GM10248 (cell line): ENCODE measurements at regions of chr20 and their contacts with region 1.

Region 1: DNA sequence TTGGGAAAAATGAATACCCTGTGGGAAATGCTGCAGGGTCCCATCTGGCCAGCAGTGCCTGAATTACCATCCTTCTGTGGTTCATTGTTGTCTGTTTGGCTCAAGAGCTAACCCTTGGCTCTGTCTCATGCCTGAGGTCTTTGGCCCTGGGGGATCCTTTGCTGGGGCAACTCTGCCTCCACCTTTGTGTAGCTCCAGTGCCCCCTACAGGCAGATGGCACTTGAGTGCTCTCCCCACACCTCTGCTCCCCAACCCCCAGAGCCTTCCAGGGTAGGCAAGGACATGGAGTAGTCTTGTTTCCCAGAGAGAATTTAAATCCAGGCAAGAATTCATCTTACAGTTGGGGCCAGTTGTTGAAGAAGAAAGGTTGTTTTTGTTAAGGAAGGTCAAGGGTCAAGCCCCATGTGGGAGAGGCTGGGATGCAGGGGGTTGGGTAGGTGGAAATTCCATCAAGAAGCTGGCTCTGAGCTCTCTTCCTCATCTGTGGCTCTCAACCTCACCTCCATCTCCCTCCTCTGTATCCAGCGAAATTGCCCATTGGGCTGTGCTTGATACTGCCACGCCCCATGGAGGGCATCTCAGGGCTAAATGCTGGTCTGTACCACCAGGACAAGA is 44.2 kb downstream of the ZNF831 start:
- DNase-seq: peak; percentile 86
- CTCF ChIP-seq: peak; percentile 79

Region 2: GRCh38 chr20:58864350-58864749 is 343.5 kb before region 1 on chr20:
- CTCF ChIA-PET with region 1: interaction called, 51 read pairs
- POLR2A ChIA-PET with region 1: no interaction called
- DNase-seq: no peak
- CTCF ChIP-seq: peak; percentile 57

Region 3: DNA sequence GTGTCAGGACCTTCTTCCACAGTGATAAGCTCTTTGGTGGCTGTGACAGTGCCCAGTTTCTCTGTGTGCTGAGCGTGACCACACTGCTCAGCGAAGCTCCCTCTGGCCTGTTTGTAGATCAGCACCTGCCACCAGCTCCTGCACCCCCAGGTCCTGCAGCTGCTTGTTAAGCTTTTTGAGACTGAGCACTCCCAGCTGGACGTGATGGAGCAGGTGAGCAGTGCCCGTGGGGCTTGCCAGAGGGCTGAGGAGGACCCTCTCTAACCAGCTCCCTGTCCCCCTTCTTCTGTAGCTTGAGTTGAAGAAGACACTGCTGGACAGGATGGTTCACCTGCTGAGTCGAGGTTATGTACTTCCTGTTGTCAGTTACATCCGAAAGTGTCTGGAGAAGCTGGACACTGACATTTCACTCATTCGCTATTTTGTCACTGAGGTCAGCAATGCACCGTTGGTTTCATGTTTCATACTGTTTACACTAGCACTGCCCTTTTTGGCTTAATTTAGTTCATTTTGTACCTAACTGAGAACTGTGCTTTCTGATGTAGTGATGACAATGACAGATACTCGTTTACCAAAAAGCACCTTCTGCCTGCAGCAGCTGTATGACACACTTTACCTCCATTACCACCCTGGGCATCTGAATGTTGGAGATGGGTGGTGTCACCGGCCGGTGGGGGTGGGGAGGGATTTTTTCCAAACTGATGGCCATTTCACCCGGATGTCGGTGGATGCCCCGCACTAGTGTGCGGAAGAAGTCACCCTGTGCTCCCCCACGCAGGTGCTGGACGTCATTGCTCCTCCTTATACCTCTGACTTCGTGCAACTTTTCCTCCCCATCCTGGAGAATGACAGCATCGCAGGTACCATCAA is 214.3 kb before region 1 on chr20:
- CTCF ChIA-PET with region 1: no interaction called
- POLR2A ChIA-PET with region 1: no interaction called
- DNase-seq: no peak
- CTCF ChIP-seq: no peak

Region 4: GRCh38 chr20:59082077-59082740 is 125.6 kb before region 1 on chr20:
- CTCF ChIA-PET with region 1: interaction called, 115 read pairs
- POLR2A ChIA-PET with region 1: no interaction called
- DNase-seq: no peak
- CTCF ChIP-seq: no peak

Region 5: GRCh38 chr20:59102841-59103299 is 105.0 kb before region 1 on chr20:
- CTCF ChIA-PET with region 1: interaction called, 15 read pairs
- POLR2A ChIA-PET with region 1: no interaction called
- DNase-seq: no peak
- CTCF ChIP-seq: no peak

Region 6: GRCh38 chr20:59222253-59223181 is 14.7 kb after region 1 on chr20:
- CTCF ChIA-PET with region 1: interaction called, 35 read pairs
- POLR2A ChIA-PET with region 1: no interaction called
- DNase-seq: peak; percentile 88
- CTCF ChIP-seq: peak; percentile 91